ENCODE measurements at regions of chr3 and their contacts with region 1.

Region 1: DNA sequence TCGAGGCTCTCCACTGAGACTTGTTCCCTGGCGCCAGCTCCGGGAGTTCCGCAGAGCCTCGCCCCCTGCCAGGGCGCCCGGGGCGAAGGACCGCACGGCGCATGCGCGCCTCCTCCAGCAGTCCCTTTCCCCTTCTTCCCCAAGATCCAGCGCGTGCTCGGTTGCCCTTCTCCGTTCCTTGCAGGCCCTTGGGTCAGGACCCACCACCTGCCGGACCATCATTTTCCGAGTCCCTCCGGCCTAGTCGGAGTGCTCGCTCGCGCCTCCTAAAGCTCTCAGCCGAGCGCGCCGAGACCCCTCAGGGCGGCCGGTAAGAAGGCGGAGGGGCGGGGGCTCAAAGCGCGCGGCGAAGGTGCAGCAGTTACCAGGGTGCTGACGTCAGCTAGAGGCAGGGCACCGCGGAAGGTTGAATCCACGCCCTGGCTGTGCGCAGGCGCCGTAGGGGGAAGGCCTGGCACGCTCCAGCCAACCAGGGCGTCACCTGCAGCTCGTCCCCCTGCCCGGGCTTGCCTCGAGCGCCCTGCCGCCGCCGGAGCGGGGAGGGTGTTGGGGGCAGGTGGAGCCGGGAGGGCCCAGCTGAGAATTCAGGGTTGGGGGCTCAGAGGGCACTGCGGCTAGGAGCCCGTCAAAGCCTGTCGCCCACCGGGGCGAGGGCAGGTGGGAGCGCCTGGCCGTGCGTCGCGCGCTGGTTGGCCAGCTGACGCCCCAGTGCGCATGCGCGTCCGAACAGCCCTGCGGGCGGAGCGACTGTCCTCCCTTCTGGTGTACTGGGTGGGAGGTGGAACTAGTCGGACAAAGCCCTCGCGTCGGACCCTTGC is at the start of gene TCAIM:
- DNase-seq: peak; percentile 98
- H3K4me3 Mint-ChIP-seq: peak within 1 kb of the TSS; percentile 90
- H3K27ac Mint-ChIP-seq: peak within 1 kb of the TSS; percentile 95
- H3K4me1 Mint-ChIP-seq: peaks cover 29% of the 10 kb centered on the region
- H3K27me3 Mint-ChIP-seq: peaks cover 8% of the 10 kb centered on the region
- CTCF ChIP-seq: no peak
- total RNA-seq, gene TCAIM: 20.4 and 26.6 TPM in 2 replicates

Region 2: GRCh38 chr3:44235604-44236484 is 102.4 kb before region 1 on chr3:
- CTCF ChIA-PET with region 1: no interaction called
- POLR2A ChIA-PET with region 1: no interaction called
- intact Hi-C with region 1: no loop called
- DNase-seq: peak; percentile 88
- H3K4me3 Mint-ChIP-seq: no peak overlapping the region
- H3K27ac Mint-ChIP-seq: no peak overlapping the region
- H3K4me1 Mint-ChIP-seq: peaks cover 6% of the 10 kb centered on the region
- H3K27me3 Mint-ChIP-seq: no peaks in the 10 kb centered on the region
- CTCF ChIP-seq: peak; percentile 51

Region 3: GRCh38 chr3:44355362-44356033 is 17.3 kb after region 1 on chr3:
- CTCF ChIA-PET with region 1: interaction called, 5 read pairs
- POLR2A ChIA-PET with region 1: interaction called, 39 read pairs
- intact Hi-C with region 1: no loop called
- DNase-seq: peak; percentile 75
- H3K4me3 Mint-ChIP-seq: no peak overlapping the region
- H3K27ac Mint-ChIP-seq: no peak overlapping the region
- H3K4me1 Mint-ChIP-seq: peaks cover 10% of the 10 kb centered on the region
- H3K27me3 Mint-ChIP-seq: no peaks in the 10 kb centered on the region
- CTCF ChIP-seq: no peak

Region 4: DNA sequence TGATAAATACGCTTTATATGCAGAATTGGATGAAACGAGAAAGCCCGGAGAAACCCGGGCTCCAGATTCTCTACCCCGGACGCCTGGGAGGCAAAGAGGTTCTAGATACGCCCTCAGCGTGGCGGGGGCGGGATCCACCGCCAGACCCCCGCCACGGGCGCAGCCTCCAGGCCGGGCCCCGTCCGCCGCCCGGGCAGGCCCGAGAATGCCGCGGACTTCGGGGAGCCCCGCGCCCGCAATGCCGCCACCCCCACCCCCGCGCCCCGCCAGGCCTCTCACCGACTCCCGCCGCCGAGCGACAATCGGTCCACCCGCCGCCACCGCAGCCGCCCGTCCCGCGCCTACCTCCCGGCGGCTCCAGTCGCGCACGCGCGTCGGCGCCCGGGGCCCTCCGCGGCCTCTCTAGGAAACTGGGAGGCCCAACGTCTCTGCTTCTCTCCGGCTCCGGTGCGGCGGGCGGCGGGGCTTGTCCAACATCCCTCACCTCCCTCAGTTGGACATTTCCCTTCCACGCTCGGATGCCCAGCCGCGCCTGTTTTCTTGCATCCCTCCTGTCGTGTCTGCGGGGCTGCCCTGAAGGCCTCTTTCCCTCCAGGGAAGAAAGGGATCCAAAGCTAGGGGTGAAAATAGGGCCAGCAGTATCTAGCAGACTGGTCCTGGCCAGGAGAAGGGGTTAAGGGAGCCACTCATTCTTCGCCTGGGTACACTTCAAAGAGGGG is 139.3 kb after region 1 on chr3 and contains the start of gene ZNF445:
- CTCF ChIA-PET with region 1: no interaction called
- POLR2A ChIA-PET with region 1: interaction called, 10 read pairs
- intact Hi-C with region 1: loop called (anchors 2 kb)
- DNase-seq: peak; percentile 75
- H3K4me3 Mint-ChIP-seq: peak within 1 kb of the TSS; percentile 88
- H3K27ac Mint-ChIP-seq: peak within 1 kb of the TSS; percentile 85
- H3K4me1 Mint-ChIP-seq: peaks cover 19% of the 10 kb centered on the region
- H3K27me3 Mint-ChIP-seq: no peaks in the 10 kb centered on the region
- CTCF ChIP-seq: no peak
- total RNA-seq, gene ZNF445: 10.1 and 11.0 TPM in 2 replicates

Region 5: DNA sequence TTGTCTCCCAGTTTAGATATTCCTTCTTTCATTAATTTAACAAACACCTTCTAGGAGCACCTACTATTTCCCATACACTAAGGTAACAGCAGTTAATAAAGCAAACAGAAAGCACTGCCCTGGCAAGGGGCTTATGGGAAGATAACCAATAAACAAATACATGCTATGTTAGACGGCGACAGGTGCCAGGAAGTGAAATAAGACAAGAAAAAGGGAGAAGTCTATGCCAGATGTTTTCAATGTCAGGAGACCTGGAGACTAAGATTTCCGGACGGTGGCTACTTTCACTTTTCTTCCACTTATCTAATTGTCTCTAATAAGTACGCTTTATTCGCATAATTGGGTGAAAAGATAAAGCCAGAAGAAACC is 171.8 kb after region 1 on chr3:
- CTCF ChIA-PET with region 1: interaction called, 3 read pairs
- POLR2A ChIA-PET with region 1: interaction called, 27 read pairs
- intact Hi-C with region 1: no loop called
- DNase-seq: peak; percentile 20
- H3K4me3 Mint-ChIP-seq: peak overlapping the region; percentile 94
- H3K27ac Mint-ChIP-seq: peak overlapping the region; percentile 94
- H3K4me1 Mint-ChIP-seq: peaks cover 10% of the 10 kb centered on the region
- H3K27me3 Mint-ChIP-seq: no peaks in the 10 kb centered on the region
- CTCF ChIP-seq: no peak

Measured in MCF 10A (cell line).